Cardiac septum (tissue), 1 donor: ENCODE measurements at regions of chr5 and their contacts with region 1.

Region 1: GRCh38 chr5:15574806-15575325 is 74.9 kb downstream of the FBXL7 start:
- DNase-seq: no peak

Region 2: DNA sequence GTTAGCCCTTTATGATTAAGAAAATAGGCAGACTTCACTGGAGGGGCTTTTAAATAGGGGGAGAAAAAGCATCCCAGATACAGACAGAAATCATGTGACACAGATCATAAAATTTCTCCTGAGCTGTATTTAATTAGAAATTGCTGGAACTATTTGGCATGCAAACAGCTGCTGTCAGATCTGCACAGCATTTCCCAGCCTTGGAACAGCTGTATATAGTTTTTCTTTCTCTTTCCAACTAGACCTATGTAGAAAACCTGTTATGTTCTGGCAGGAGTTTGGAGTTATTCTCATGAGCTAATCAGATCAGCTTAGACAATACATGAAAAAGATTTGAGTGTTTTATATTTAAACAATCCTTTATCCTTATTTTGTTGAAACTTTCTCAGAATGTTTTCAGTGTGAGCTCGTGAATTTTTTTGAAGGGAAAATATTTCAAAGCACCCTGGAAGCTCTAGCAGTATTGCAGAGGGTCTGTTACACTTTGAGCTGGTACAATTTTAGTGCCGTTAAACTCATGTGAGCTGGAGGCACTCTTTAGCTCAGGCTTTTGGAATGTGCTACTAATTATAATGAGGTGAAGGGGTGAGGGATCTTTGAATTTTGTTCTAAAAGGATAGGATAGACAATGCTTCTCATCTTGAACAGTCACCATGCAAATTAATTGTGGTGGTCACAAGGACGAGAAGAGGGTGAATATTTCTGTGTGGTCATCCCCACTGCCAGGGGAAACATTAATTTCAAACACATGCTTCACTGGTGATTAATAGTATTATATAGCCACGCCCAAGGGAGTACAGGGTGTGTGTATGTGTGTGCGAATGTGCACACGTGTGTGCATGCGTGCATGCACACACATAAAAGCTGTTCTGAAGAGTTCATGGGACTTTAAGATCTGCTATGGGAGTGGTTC is 314.3 kb before region 1 on chr5:
- intact Hi-C with region 1: no loop called
- DNase-seq: no peak

Region 3: GRCh38 chr5:15763754-15764153 is 188.9 kb after region 1 on chr5:
- intact Hi-C with region 1: no loop called
- DNase-seq: no peak

Region 4: GRCh38 chr5:15794052-15794985 is 219.5 kb after region 1 on chr5:
- intact Hi-C with region 1: no loop called
- DNase-seq: no peak

Region 5: GRCh38 chr5:15807871-15808270 is 233.0 kb after region 1 on chr5:
- intact Hi-C with region 1: loop called (anchors 5 kb)
- DNase-seq: peak; percentile 82

Region 6: DNA sequence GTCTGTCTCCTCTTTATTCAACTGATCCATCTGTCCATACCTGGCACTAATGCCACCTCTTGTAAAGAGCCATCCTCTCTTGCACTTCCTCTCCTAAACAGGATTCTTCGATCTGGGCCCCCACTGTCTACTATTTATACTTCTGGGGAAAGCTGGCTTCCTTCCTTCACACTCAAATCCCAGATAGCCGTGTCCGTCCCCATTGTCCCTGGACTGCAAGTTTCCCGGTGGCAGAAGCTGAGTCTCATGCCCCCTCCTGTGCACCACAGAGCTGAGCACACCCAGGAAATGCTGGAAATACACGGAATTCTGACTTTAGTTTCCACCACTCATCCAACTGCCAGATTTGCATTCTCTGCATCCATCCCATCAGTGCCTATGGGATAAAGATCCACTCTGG is 520.7 kb after region 1 on chr5:
- intact Hi-C with region 1: no loop called
- DNase-seq: no peak